ENCODE measurements at regions of chr17 and their contacts with region 1.

Region 1: DNA sequence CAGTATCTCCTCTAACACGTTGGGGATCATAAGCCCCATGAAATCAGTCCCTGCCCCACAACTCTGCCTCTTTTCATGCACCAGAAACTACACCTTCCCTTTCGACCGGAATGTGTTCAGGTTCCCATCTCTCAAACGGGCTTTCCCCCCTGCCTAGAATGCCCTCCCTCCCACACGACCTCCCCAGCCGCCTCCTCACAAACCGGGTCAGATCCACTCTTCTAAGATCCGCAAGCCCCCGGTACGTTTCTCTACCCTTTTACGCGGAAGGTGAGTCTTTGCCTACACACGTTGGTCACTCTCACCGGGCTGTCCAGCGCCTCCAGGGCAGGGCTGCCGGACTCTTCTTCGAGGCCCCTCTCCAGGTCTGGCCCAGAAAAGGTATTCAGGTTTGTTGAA is 708 bp downstream of the DHX33 start:
- DNase-seq: no peak
- H3K4me3 Mint-ChIP-seq: peak overlapping the region; percentile 92
- H3K27ac Mint-ChIP-seq: peak overlapping the region; percentile 93
- H3K4me1 Mint-ChIP-seq: peaks cover 33% of the 10 kb centered on the region
- H3K27me3 Mint-ChIP-seq: no peaks in the 10 kb centered on the region
- CTCF ChIP-seq: no peak

Region 2: GRCh38 chr17:5329784-5330557 is 138.1 kb before region 1 on chr17:
- CTCF ChIA-PET with region 1: no interaction called
- POLR2A ChIA-PET with region 1: no interaction called
- intact Hi-C with region 1: no loop called
- DNase-seq: no peak
- H3K4me3 Mint-ChIP-seq: no peak overlapping the region
- H3K27ac Mint-ChIP-seq: no peak overlapping the region
- H3K4me1 Mint-ChIP-seq: no peaks in the 10 kb centered on the region
- H3K27me3 Mint-ChIP-seq: no peaks in the 10 kb centered on the region
- CTCF ChIP-seq: no peak

Region 3: DNA sequence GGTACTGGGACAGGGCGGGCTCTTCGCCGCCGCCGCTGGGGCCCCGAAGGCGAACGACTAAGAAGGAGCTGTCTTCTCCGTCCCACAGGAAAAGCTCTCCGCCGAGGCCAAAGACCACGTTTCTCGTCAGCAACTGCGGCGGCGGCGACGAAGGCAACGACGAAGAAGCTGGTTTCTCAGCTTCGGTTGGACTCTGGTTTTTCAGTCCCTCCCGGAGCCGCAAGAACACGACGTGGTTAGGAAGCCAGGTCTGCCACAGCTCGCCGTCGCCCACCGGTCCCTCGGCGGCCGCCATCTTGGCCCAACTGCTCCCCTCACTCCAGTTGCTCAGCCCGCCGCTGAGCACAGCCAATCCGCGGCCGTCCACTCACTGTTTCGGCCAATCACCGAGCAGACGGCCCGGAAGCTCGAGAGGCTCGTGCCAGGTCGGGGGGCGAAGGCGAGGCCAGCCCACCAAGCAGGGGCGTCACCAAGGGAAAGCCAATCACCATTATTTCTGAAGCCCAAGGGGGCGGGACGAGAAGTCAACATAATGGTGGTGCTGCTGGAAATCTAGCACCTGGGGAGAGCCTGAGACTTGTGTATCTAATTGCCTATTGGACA is 48.6 kb before region 1 on chr17 and contains the start of gene NUP88:
- CTCF ChIA-PET with region 1: no interaction called
- POLR2A ChIA-PET with region 1: interaction called, 16 read pairs
- intact Hi-C with region 1: no loop called
- DNase-seq: peak; percentile 97
- H3K4me3 Mint-ChIP-seq: peak within 1 kb of the TSS; percentile 98
- H3K27ac Mint-ChIP-seq: peak within 1 kb of the TSS; percentile 96
- H3K4me1 Mint-ChIP-seq: peaks cover 17% of the 10 kb centered on the region
- H3K27me3 Mint-ChIP-seq: no peaks in the 10 kb centered on the region
- CTCF ChIP-seq: no peak
- total RNA-seq, gene NUP88: 88.2 and 89.2 TPM in 2 replicates

Region 4: GRCh38 chr17:5486204-5487124 is 18.4 kb after region 1 on chr17 and contains the start of gene MIS12:
- CTCF ChIA-PET with region 1: interaction called, 7 read pairs
- POLR2A ChIA-PET with region 1: interaction called, 108 read pairs
- intact Hi-C with region 1: no loop called
- DNase-seq: peak; percentile 100
- H3K4me3 Mint-ChIP-seq: peak within 1 kb of the TSS; percentile 91
- H3K27ac Mint-ChIP-seq: peak within 1 kb of the TSS; percentile 99
- H3K4me1 Mint-ChIP-seq: peaks cover 14% of the 10 kb centered on the region
- H3K27me3 Mint-ChIP-seq: no peaks in the 10 kb centered on the region
- CTCF ChIP-seq: no peak
- total RNA-seq, gene MIS12: 32.8 and 44.2 TPM in 2 replicates

Region 5: GRCh38 chr17:5509482-5509881 is 41.4 kb after region 1 on chr17:
- CTCF ChIA-PET with region 1: no interaction called
- POLR2A ChIA-PET with region 1: no interaction called
- intact Hi-C with region 1: no loop called
- DNase-seq: peak; percentile 16
- H3K4me3 Mint-ChIP-seq: no peak overlapping the region
- H3K27ac Mint-ChIP-seq: no peak overlapping the region
- H3K4me1 Mint-ChIP-seq: no peaks in the 10 kb centered on the region
- H3K27me3 Mint-ChIP-seq: no peaks in the 10 kb centered on the region
- CTCF ChIP-seq: no peak

Region 6: GRCh38 chr17:5522476-5522875 is 54.4 kb after region 1 on chr17:
- CTCF ChIA-PET with region 1: no interaction called
- POLR2A ChIA-PET with region 1: no interaction called
- intact Hi-C with region 1: no loop called
- DNase-seq: no peak
- H3K4me3 Mint-ChIP-seq: no peak overlapping the region
- H3K27ac Mint-ChIP-seq: no peak overlapping the region
- H3K4me1 Mint-ChIP-seq: no peaks in the 10 kb centered on the region
- H3K27me3 Mint-ChIP-seq: no peaks in the 10 kb centered on the region
- CTCF ChIP-seq: no peak